ENCODE measurements at regions of chr18 and their contacts with region 1.

Region 1: GRCh38 chr18:21600526-21601410 is at the start of gene ESCO1:
- DNase-seq: peak; percentile 90
- H3K4me3 ChIP-seq: peak within 1 kb of the TSS; percentile 99
- CTCF ChIP-seq: peak; percentile 92

Region 2: DNA sequence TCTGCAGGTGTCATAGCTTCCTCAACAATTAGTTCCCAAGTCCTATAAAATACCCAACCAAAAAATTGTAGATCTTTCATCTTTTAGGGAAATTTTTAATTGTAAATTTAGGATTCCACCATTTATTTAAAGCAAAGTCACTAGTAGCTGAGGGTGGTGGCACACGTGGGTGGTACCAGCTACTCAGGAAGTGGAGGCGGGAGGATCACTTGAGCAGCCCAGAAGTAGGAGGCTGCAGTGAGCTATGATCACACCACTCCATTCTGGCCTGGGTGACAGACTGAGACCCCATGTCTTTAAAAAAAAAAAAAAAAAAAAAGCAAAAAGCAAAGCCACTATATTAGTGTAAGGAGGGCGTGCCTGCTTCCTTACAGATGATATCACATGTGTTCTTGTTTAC is 419.0 kb before region 1 on chr18:
- CTCF ChIA-PET with region 1: no interaction called
- POLR2A ChIA-PET with region 1: no interaction called
- DNase-seq: no peak
- H3K4me3 ChIP-seq: no peak overlapping the region
- CTCF ChIP-seq: no peak

Region 3: DNA sequence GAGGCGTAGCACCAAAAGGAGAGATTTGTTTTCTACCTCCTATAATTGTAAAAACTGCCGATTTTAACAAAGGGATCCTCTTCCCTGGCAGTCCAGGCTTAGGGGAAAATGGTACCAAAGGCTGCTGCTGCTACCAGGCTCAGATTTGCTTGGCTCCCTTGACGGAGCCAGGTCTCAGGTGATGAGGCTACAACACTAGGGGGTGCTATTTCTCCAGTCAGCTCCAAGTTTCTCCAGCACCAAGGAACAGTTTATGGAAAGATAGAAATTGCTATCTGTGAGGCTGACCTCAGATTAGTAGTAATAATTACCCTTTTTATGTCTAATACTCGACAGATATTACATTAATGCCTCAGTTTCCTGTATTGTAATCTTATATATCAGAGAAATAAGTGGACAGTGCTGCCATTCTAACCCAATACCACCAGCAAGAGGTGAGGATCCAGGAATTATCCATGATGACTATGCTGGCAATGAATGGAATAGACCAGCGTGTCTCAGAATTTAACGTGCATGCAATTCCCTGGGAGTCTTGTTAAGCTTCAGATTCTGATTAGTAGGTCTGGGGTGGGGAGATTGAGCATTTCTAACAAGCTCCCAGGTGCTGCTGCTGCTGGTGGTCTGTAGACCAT is 111.5 kb before region 1 on chr18:
- CTCF ChIA-PET with region 1: interaction called, 22 read pairs
- POLR2A ChIA-PET with region 1: no interaction called
- DNase-seq: peak; percentile 9
- H3K4me3 ChIP-seq: no peak overlapping the region
- CTCF ChIP-seq: peak; percentile 68

Region 4: DNA sequence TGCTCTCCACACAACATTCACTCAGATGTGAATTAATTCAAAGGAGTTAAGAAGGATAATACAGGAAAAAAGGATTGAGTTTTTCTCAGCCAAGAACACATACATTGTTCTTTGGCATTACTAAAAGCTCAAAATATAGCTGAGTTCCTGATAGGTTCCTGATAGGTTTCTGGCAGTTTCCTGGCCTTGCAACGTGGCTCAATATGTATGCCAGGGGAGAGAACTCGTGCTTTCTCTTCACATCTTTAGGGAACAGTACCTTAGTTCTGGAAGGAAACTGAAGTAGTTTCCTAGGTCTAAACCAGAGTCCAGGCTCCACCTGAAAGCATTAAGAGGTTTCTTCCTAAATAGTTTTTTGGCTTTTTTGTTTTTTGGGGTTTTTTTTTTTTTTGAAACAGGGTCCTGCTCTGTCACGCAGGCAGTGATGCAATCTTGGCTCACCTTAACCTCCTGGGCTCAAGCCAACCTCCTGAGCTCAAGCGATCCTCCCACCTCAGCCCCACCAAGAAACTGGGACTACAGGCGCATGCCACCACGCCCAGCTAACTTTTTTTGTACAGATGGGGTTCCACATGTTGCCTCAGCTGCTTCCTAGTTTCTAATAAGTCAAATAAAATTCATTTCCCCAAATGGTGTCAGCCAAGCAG is 43.0 kb before region 1 on chr18:
- CTCF ChIA-PET with region 1: interaction called, 10 read pairs
- POLR2A ChIA-PET with region 1: no interaction called
- DNase-seq: no peak
- H3K4me3 ChIP-seq: no peak overlapping the region
- CTCF ChIP-seq: no peak

Region 5: GRCh38 chr18:21571772-21572171 is 29.0 kb before region 1 on chr18:
- CTCF ChIA-PET with region 1: interaction called, 15 read pairs
- POLR2A ChIA-PET with region 1: no interaction called
- DNase-seq: no peak
- H3K4me3 ChIP-seq: no peak overlapping the region
- CTCF ChIP-seq: no peak

Region 6: GRCh38 chr18:21584391-21584790 is 16.4 kb before region 1 on chr18:
- CTCF ChIA-PET with region 1: interaction called, 34 read pairs
- POLR2A ChIA-PET with region 1: no interaction called
- DNase-seq: no peak
- H3K4me3 ChIP-seq: no peak overlapping the region
- CTCF ChIP-seq: no peak

Region 7: GRCh38 chr18:21612125-21612991 is 11.6 kb after region 1 on chr18 and contains the start of gene SNRPD1:
- CTCF ChIA-PET with region 1: interaction called, 104 read pairs
- POLR2A ChIA-PET with region 1: interaction called, 13 read pairs
- DNase-seq: peak; percentile 60
- H3K4me3 ChIP-seq: peak within 1 kb of the TSS; percentile 94
- CTCF ChIP-seq: peak; percentile 98

Measured in AG04449 (cell line).